ENCODE measurements at regions of chr7 and their contacts with region 1.

Region 1: GRCh38 chr7:99504603-99505323 is at the start of gene ZKSCAN5:
- DNase-seq: peak; percentile 96
- H3K4me3 ChIP-seq: peak within 1 kb of the TSS; percentile 92
- H3K27ac ChIP-seq: peak within 1 kb of the TSS; percentile 73
- H3K4me1 ChIP-seq: peaks cover 18% of the 10 kb centered on the region
- CTCF ChIP-seq: no peak
- total RNA-seq, gene ZKSCAN5: 11.4 and 12.2 TPM in 2 replicates

Region 2: GRCh38 chr7:98993024-98993897 is 511.5 kb before region 1 on chr7:
- CTCF ChIA-PET with region 1: no interaction called
- POLR2A ChIA-PET with region 1: no interaction called
- intact Hi-C with region 1: no loop called
- DNase-seq: no peak
- H3K4me3 ChIP-seq: no peak overlapping the region
- H3K27ac ChIP-seq: no peak overlapping the region
- H3K4me1 ChIP-seq: no peaks in the 10 kb centered on the region
- CTCF ChIP-seq: peak; percentile 53

Region 3: GRCh38 chr7:99374103-99375064 is 130.4 kb before region 1 on chr7 and contains the start of gene ARPC1B:
- CTCF ChIA-PET with region 1: no interaction called
- POLR2A ChIA-PET with region 1: interaction called, 3 read pairs
- intact Hi-C with region 1: loop called (anchors 5 kb)
- DNase-seq: peak; percentile 87
- H3K4me3 ChIP-seq: peak within 1 kb of the TSS; percentile 90
- H3K27ac ChIP-seq: peak within 1 kb of the TSS; percentile 55
- H3K4me1 ChIP-seq: peaks cover 22% of the 10 kb centered on the region
- CTCF ChIP-seq: no peak
- total RNA-seq, gene ARPC1B: 174 and 191 TPM in 2 replicates

Region 4: DNA sequence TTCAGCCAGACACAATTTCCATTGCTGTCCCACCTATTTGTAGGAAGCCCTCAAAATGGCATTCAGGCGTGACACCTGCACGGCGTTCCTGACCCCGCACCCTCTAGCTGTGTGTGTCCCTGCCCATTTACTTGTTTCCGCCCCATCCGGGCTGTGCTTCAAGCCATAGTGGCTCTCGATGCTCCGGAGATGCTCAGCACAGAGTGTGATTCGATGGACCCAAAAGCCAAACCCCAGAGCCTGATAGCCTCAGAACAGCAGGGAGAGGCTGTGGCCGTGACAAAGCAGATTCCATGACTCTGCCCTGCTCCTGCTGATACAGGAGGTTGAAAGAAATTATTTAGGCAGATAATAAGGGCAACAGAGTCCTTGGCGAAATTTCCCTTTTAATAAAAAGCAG is 82.6 kb before region 1 on chr7:
- CTCF ChIA-PET with region 1: no interaction called
- POLR2A ChIA-PET with region 1: no interaction called
- intact Hi-C with region 1: no loop called
- DNase-seq: no peak
- H3K4me3 ChIP-seq: no peak overlapping the region
- H3K27ac ChIP-seq: no peak overlapping the region
- H3K4me1 ChIP-seq: no peaks in the 10 kb centered on the region
- CTCF ChIP-seq: no peak

Region 5: GRCh38 chr7:99472561-99473243 is 32.1 kb before region 1 on chr7 and contains the start of gene ZNF789:
- CTCF ChIA-PET with region 1: interaction called, 3 read pairs
- POLR2A ChIA-PET with region 1: interaction called, 3 read pairs
- intact Hi-C with region 1: loop called (anchors 1 kb)
- DNase-seq: peak; percentile 98
- H3K4me3 ChIP-seq: peak within 1 kb of the TSS; percentile 85
- H3K27ac ChIP-seq: peak within 1 kb of the TSS; percentile 93
- H3K4me1 ChIP-seq: peaks cover 12% of the 10 kb centered on the region
- CTCF ChIP-seq: no peak
- total RNA-seq, gene ZNF789: 23.2 and 32.2 TPM in 2 replicates

Region 6: DNA sequence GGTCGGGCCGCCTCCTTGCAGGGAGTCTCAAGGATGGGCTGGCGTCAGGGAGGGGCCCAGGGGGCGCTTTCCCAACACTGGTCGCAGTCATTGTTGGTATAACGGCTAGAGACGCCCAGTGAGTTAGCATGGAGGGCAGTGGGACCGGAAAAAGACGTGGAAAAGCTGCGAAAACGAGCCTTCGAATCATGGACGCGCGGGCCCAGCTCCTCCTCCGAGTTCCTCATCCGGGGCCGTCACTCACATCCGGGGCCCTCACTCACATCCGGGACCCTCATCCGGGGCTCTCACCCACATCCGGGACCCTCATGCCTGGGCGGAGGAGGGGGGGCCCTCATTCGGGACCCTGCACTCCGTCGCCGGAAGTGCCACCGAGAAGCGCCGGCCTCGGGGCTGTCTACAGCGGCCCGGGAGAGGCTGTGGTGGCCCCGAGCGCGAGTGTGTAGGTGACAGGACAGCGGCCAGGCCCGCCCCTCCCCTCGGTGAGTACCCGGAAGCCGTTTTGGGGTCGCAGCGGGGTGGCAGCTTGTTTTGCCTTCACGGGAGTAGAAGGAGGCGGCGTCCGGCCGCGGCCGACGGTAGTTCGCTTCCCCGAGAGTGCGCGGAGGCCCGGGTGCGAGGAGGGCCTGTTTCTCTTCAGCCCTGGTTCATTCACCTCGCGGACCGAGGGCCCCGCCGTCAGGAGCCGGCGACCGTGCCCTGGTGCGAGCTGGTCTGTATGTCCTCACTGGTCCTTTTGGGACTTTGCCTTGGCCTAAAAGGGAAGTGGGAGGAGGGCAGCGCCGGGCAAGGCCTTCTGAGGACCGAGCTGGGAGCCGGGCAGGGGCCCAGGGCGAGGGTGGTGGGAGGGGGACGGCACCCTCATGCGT is 53.8 kb after region 1 on chr7 and contains the start of gene ZNF655:
- CTCF ChIA-PET with region 1: no interaction called
- POLR2A ChIA-PET with region 1: interaction called, 20 read pairs
- intact Hi-C with region 1: loop called (anchors 2 kb)
- DNase-seq: peak; percentile 94
- H3K4me3 ChIP-seq: peak within 1 kb of the TSS; percentile 97
- H3K27ac ChIP-seq: peak within 1 kb of the TSS; percentile 79
- H3K4me1 ChIP-seq: peaks cover 23% of the 10 kb centered on the region
- CTCF ChIP-seq: no peak
- total RNA-seq, gene ZNF655: 64.1 and 100 TPM in 2 replicates

Region 7: GRCh38 chr7:100081535-100082102 is 576.9 kb after region 1 on chr7 and contains the start of gene ZNF3:
- CTCF ChIA-PET with region 1: no interaction called
- POLR2A ChIA-PET with region 1: no interaction called
- intact Hi-C with region 1: no loop called
- DNase-seq: peak; percentile 97
- H3K4me3 ChIP-seq: peak within 1 kb of the TSS; percentile 73
- H3K27ac ChIP-seq: peak within 1 kb of the TSS; percentile 64
- H3K4me1 ChIP-seq: peaks cover 22% of the 10 kb centered on the region
- CTCF ChIP-seq: peak; percentile 96
- total RNA-seq, gene ZNF3: 19.8 and 21.8 TPM in 2 replicates